ENCODE measurements at regions of chr18 and their contacts with region 1.

Region 1: GRCh38 chr18:11149441-11150270 is at the start of gene PIEZO2:
- DNase-seq: peak in 3 of 14 experiments; percentile 3 to 32 (median 19)
- ATAC-seq: no peak
- H3K4me3 ChIP-seq: no peak within 1 kb of the TSS
- H3K4me3 Mint-ChIP-seq: no peak within 1 kb of the TSS
- H3K27ac ChIP-seq: no peak within 1 kb of the TSS
- H3K27ac Mint-ChIP-seq: no peak within 1 kb of the TSS
- H3K4me1 ChIP-seq: no peaks in the 10 kb centered on the region
- H3K4me1 Mint-ChIP-seq: no peaks in the 10 kb centered on the region
- H3K27me3 ChIP-seq: peaks cover 16 to 35% of the 10 kb centered on the region in 2 experiments
- H3K27me3 Mint-ChIP-seq: peaks cover 72% of the 10 kb centered on the region
- CTCF ChIP-seq: no peak
- total RNA-seq, gene PIEZO2: not detected

Region 2: GRCh38 chr18:10560450-10561045 is 589.1 kb before region 1 on chr18:
- CTCF ChIA-PET with region 1: no interaction called
- POLR2A ChIA-PET with region 1: no interaction called
- intact Hi-C with region 1: loop called in 1 of 2 experiments (anchors 5 kb)
- DNase-seq: peak; percentile 23 to 70 (median 49)
- ATAC-seq: peak; percentile 71
- H3K4me3 ChIP-seq: peak overlapping the region; percentile 21
- H3K4me3 Mint-ChIP-seq: no peak overlapping the region
- H3K27ac ChIP-seq: no peak overlapping the region
- H3K27ac Mint-ChIP-seq: no peak overlapping the region
- H3K4me1 ChIP-seq: peaks cover 11% of the 10 kb centered on the region
- H3K4me1 Mint-ChIP-seq: peaks cover 10% of the 10 kb centered on the region
- H3K27me3 ChIP-seq: no peaks in the 10 kb centered on the region
- H3K27me3 Mint-ChIP-seq: no peaks in the 10 kb centered on the region
- CTCF ChIP-seq: peak; percentile 78